ENCODE measurements at regions of chr3 and their contacts with region 1.

Region 1: DNA sequence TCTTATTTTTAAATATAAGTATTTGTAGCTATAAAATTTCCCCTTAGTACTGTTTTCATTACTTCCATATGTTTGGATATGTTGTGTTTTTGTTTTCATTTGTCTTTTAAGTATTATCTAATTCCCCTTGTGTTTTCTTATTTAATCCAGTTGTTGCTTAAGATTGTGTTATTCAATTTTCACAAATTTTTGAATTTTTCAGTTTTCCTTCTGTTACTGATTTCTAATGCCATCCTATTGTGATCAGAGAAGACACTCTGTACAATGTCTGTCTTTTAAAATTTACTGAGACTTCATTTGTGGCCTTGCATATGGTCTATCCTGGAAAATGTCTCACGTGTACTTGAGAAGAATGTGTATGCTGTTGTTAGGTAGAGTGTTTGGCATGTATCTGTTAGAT is 795.6 kb upstream of the CFAP20DC start:
- DNase-seq: no peak
- H3K4me3 ChIP-seq: no peak overlapping the region
- H3K27ac ChIP-seq: no peak overlapping the region
- H3K4me1 ChIP-seq: no peaks in the 10 kb centered on the region
- H3K27me3 ChIP-seq: no peaks in the 10 kb centered on the region
- CTCF ChIP-seq: no peak
- EP300 ChIP-seq: no peak
- POLR2A ChIP-seq: no peak

Region 2: GRCh38 chr3:59424268-59425010 is 420.9 kb before region 1 on chr3:
- intact Hi-C with region 1: no loop called
- DNase-seq: no peak
- H3K4me3 ChIP-seq: no peak overlapping the region
- H3K27ac ChIP-seq: peak overlapping the region in 2 of 4 donors; percentile 51 to 57
- H3K4me1 ChIP-seq: peaks cover 0 to 17% (median 12%) of the 10 kb centered on the region in 4 donors
- H3K27me3 ChIP-seq: no peaks in the 10 kb centered on the region
- CTCF ChIP-seq: no peak
- EP300 ChIP-seq: no peak
- POLR2A ChIP-seq: no peak

Region 3: GRCh38 chr3:60086811-60087210 is 241.4 kb after region 1 on chr3:
- intact Hi-C with region 1: loop called (anchors 5 kb)
- DNase-seq: no peak
- H3K4me3 ChIP-seq: no peak overlapping the region
- H3K27ac ChIP-seq: no peak overlapping the region
- H3K4me1 ChIP-seq: no peaks in the 10 kb centered on the region
- H3K27me3 ChIP-seq: no peaks in the 10 kb centered on the region
- CTCF ChIP-seq: no peak
- EP300 ChIP-seq: no peak
- POLR2A ChIP-seq: no peak

Measured in sigmoid colon (tissue), 7 donors.